Caco-2 (cell line): ENCODE measurements at regions of chr1 and their contacts with region 1.

Region 1: DNA sequence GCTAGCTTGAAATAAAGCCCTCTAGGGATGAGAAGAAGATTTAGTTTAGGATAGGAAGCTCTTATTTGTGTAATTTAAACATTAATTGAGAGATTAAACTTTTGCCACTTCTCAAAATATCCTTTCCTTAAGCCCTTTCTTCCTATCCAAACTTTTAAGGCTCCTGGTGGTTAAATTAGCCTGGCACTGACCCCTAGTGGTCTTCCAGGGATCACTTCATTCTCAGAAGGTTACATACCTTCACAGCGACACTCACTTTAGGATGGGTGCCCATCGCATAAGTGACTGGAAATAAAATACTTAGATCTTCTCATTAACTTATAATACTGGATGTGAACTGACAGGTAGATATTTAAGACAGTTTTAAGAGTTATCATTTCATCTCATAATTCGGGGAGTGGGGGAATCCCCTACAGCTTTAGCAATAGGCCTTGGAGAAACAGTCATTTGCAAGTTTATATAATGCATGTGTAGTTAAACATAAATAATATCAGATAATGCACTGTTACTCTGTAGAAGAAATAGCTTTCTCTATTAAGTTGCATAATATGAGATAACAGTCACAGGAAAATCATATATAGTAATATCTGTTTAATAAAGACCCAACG is 7.4 kb downstream of the LHX9 start:
- DNase-seq: peak in 1 of 2 experiments; percentile 55
- H3K4me3 ChIP-seq: no peak overlapping the region
- H3K4me3 Mint-ChIP-seq: no peak overlapping the region
- H3K27ac Mint-ChIP-seq: no peak overlapping the region
- H3K4me1 ChIP-seq: no peaks in the 10 kb centered on the region
- H3K4me1 Mint-ChIP-seq: no peaks in the 10 kb centered on the region
- H3K27me3 ChIP-seq: no peaks in the 10 kb centered on the region
- H3K27me3 Mint-ChIP-seq: peaks cover 7% of the 10 kb centered on the region
- CTCF ChIP-seq: peak; percentile 71 to 82

Region 2: DNA sequence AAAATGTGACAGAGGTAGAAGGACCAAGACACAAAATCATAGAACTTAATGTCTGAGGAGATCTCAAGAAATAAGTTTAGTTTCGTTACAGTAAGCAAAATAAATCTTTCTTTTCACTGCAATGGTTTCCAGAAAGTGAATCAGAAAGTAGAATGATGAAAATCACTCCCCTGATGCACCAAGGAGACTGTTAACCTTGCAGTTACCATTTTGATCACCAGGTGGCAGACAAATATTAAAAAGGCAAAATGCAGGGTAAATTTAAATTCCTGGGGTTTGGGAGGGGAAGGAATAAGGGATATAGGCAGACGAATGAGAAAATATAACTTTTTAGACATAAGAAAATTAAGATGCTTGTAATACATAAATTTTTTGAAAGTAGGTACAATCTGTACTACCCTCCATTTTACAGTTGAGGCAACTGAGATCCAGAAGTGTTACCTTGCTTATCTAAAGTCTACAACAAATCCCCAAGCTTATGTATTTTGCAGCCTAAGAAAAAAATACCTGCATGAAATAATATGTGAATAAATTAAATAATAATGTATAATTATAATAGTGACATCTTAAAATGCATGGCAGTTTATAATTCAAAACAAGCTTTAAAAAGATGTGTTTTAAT is 403.4 kb before region 1 on chr1:
- CTCF ChIA-PET with region 1: no interaction called
- POLR2A ChIA-PET with region 1: no interaction called
- intact Hi-C with region 1: loop called (anchors 1 kb)
- DNase-seq: peak in 1 of 2 experiments; percentile 47
- H3K4me3 ChIP-seq: no peak overlapping the region
- H3K4me3 Mint-ChIP-seq: no peak overlapping the region
- H3K27ac Mint-ChIP-seq: no peak overlapping the region
- H3K4me1 ChIP-seq: no peaks in the 10 kb centered on the region
- H3K4me1 Mint-ChIP-seq: no peaks in the 10 kb centered on the region
- H3K27me3 ChIP-seq: no peaks in the 10 kb centered on the region
- H3K27me3 Mint-ChIP-seq: no peaks in the 10 kb centered on the region
- CTCF ChIP-seq: peak; percentile 64 to 70

Region 3: GRCh38 chr1:197692965-197693364 is 231.7 kb before region 1 on chr1:
- CTCF ChIA-PET with region 1: no interaction called
- POLR2A ChIA-PET with region 1: no interaction called
- intact Hi-C with region 1: loop called (anchors 1 kb)
- DNase-seq: no peak
- H3K4me3 ChIP-seq: no peak overlapping the region
- H3K4me3 Mint-ChIP-seq: no peak overlapping the region
- H3K27ac Mint-ChIP-seq: no peak overlapping the region
- H3K4me1 ChIP-seq: no peaks in the 10 kb centered on the region
- H3K4me1 Mint-ChIP-seq: no peaks in the 10 kb centered on the region
- H3K27me3 ChIP-seq: no peaks in the 10 kb centered on the region
- H3K27me3 Mint-ChIP-seq: no peaks in the 10 kb centered on the region
- CTCF ChIP-seq: peak in 1 of 2 experiments; percentile 24

Region 4: GRCh38 chr1:197868751-197869489 is 55.7 kb before region 1 on chr1:
- CTCF ChIA-PET with region 1: no interaction called
- POLR2A ChIA-PET with region 1: no interaction called
- intact Hi-C with region 1: loop called (anchors 2 kb)
- DNase-seq: peak; percentile 36 to 45
- H3K4me3 ChIP-seq: no peak overlapping the region
- H3K4me3 Mint-ChIP-seq: no peak overlapping the region
- H3K27ac Mint-ChIP-seq: no peak overlapping the region
- H3K4me1 ChIP-seq: no peaks in the 10 kb centered on the region
- H3K4me1 Mint-ChIP-seq: peaks cover 8% of the 10 kb centered on the region
- H3K27me3 ChIP-seq: no peaks in the 10 kb centered on the region
- H3K27me3 Mint-ChIP-seq: peaks cover 6% of the 10 kb centered on the region
- CTCF ChIP-seq: peak; percentile 44 to 55

Region 5: DNA sequence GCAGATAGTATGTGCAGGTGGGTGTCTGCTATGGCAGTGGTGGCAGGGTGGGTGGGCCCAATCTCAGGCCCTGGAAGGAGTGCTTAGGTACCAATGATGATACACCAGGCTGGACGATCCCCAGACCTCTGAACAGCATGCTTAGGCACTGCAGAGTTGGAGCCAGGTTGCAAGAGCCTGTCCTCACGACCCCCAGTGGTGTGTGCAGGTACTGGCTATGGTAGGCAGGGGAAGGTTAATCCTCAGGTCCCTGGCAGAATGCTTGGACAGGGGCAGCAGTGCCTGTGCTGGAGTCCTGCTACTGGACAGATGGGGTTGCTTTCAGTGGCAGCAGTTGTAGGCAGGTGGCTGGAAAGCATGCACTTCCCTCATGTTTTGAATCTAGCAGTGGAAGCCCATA is 131.6 kb after region 1 on chr1:
- CTCF ChIA-PET with region 1: no interaction called
- POLR2A ChIA-PET with region 1: no interaction called
- intact Hi-C with region 1: loop called (anchors 5 kb)
- DNase-seq: peak; percentile 34 to 45
- H3K4me3 ChIP-seq: no peak overlapping the region
- H3K4me3 Mint-ChIP-seq: no peak overlapping the region
- H3K27ac Mint-ChIP-seq: no peak overlapping the region
- H3K4me1 ChIP-seq: no peaks in the 10 kb centered on the region
- H3K4me1 Mint-ChIP-seq: no peaks in the 10 kb centered on the region
- H3K27me3 ChIP-seq: no peaks in the 10 kb centered on the region
- H3K27me3 Mint-ChIP-seq: no peaks in the 10 kb centered on the region
- CTCF ChIP-seq: peak; percentile 30 to 38

Region 6: DNA sequence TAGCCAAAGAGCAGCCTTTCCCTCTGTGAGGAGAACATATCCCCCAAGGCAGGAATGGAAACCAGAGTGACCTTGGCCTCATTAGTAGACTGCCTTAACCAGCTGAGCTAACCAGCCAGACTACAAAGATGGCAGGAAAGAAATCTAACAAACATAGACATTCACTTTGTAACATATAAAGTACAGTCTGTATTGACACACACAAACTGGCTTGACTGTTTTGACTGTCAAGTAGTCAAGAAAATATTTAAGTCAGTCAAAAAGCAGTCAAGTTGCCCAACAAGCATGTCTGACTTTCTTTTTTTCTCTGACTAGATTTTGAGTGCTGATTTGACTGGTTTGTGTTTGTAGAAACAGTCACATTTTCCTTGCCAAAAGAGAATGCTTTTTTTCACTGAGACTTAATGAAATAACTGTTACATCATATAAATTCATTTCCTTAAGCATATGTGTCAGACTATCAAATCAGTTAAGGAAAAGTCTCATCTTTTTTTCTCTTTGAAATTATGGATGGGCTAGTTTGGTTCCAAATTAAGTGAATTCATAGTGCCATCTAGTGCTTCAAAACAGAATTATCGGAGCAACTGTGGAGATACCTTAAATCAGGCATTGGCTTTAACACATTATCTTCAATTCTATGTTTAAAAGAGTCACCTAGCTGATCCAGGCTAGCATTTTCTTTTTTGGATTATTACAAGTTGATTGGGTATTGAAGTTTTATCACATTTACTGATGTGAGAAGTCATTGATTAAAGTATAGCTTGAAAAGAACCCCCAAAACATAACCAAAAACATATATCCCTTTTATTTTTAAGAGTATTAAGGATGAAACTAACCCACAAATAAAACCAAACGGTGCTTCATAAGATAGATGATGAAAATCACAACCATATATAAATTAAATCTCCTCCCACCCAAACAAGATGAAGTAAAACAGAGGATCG is 540.9 kb after region 1 on chr1:
- CTCF ChIA-PET with region 1: no interaction called
- POLR2A ChIA-PET with region 1: no interaction called
- intact Hi-C with region 1: loop called (anchors 2 kb)
- DNase-seq: peak in 1 of 2 experiments; percentile 50
- H3K4me3 ChIP-seq: no peak overlapping the region
- H3K4me3 Mint-ChIP-seq: no peak overlapping the region
- H3K27ac Mint-ChIP-seq: no peak overlapping the region
- H3K4me1 ChIP-seq: no peaks in the 10 kb centered on the region
- H3K4me1 Mint-ChIP-seq: no peaks in the 10 kb centered on the region
- H3K27me3 ChIP-seq: no peaks in the 10 kb centered on the region
- H3K27me3 Mint-ChIP-seq: peaks cover 2% of the 10 kb centered on the region
- CTCF ChIP-seq: peak; percentile 53 to 58